ENCODE measurements at regions of chr4 and their contacts with region 1.

Region 1: DNA sequence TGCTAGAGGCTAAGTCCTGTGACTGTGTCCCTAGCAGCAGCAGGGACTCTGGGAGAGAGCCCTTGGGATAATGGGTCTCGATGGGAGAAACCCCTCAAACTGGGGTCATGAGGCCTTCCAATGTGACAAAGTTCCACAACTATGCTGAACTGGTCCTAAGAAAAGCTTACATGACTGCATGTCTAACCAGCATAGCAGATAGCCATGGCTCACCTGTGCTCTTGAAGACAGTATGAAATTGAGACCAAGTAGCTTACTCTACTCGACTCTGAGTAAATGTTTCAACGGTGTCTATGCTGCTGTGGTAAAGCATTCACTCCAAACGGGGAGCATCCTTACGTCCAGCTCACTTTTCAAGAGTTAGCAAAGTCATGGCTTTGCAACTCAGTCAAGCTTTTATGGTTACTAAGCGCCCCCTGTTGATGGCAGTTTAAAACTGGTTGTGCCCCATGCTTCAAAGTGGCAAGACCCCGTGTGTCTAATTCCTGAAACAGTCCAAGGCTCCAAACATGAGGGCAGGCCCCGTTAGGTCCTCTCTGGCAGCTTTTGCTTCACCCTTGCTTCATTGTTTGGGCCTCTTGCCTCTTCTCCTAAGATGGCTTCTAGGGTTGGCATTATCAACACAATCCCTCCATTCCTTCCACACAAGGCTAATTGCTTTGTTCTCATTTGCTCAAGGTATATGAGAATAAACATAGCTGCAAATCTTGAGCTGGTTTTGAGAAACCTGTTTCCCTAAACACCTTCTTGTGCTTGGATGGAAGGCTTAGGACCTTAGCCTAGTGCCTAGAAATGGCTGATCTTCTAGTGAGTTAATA is 46.6 kb downstream of the CCNG2 start:
- DNase-seq: peak; percentile 70 to 80 (median 72)
- ATAC-seq: peak; percentile 86
- H3K4me3 ChIP-seq: no peak overlapping the region
- H3K27ac ChIP-seq: no peak overlapping the region
- H3K4me1 ChIP-seq: no peaks in the 10 kb centered on the region
- H3K27me3 ChIP-seq: no peaks in the 10 kb centered on the region
- CTCF ChIP-seq: peak; percentile 51 to 90 (median 83)
- POLR2A ChIP-seq: no peak

Region 2: GRCh38 chr4:77126809-77127208 is 76.8 kb before region 1 on chr4:
- intact Hi-C with region 1: loop called (anchors 10 kb)
- DNase-seq: no peak
- ATAC-seq: no peak
- H3K4me3 ChIP-seq: no peak overlapping the region
- H3K27ac ChIP-seq: peak overlapping the region in 1 of 4 donors; percentile 21
- H3K4me1 ChIP-seq: no peaks in the 10 kb centered on the region
- H3K27me3 ChIP-seq: no peaks in the 10 kb centered on the region
- CTCF ChIP-seq: no peak
- POLR2A ChIP-seq: no peak

Measured in body of pancreas (tissue), 4 donors.